ENCODE measurements at regions of chr22 and their contacts with region 1.

Region 1: DNA sequence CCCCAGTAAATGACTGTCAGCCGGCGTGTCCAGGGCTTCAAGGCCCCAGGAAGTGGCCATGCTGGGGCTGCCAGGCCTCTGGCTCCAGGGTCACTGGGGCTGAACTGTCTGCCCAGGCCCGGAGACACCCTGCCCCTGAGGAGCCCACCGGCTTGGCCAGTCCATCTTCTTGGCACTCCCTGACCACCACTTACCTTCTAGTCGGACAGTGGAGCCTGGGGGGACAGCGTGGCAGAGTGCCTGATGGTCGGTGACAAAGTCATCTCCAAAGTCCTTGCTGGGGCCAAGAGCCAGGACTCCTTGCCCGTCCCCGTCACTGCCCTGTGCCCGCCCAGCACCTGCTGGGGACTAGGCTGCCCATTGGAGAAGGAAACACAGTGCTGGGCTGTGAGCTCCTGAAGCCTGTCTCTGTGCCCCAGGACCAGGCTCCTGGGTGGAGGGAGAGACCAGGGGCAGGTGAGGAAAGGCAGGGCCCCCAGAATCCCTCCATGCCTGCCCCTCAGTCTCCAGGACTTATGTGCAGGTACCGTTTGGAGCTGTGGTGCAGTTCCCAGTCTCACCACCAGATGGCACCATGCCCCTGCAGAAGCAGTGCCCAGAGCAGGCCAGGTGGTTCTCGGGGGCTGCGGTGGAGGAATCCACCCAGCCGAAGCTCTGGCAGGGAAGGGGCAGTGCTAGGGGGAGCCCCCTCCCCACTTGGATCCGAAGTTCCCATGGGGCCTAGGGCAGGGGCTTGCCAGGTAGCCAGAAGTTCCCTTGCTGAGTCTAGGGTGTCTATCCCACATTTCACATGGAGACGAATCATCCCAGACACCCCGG is 6.0 kb upstream of the CCDC188 start:
- DNase-seq: peak; percentile 80 to 97 (median 89)
- ATAC-seq: peak; percentile 98
- H3K4me3 ChIP-seq: no peak overlapping the region
- H3K4me3 Mint-ChIP-seq: no peak overlapping the region
- H3K27ac ChIP-seq: no peak overlapping the region
- H3K27ac Mint-ChIP-seq: no peak overlapping the region
- H3K4me1 ChIP-seq: no peaks in the 10 kb centered on the region
- H3K4me1 Mint-ChIP-seq: peaks cover 4% of the 10 kb centered on the region
- H3K27me3 ChIP-seq: peaks cover 0 to 4% of the 10 kb centered on the region in 2 experiments
- H3K27me3 Mint-ChIP-seq: peaks cover 2% of the 10 kb centered on the region
- CTCF ChIP-seq: peak; percentile 97

Region 2: GRCh38 chr22:20205964-20206708 is 49.3 kb after region 1 on chr22:
- CTCF ChIA-PET with region 1: interaction called, 8 read pairs
- POLR2A ChIA-PET with region 1: no interaction called
- intact Hi-C with region 1: loop called in 1 of 2 experiments (anchors 1 kb)
- DNase-seq: peak; percentile 21 to 85 (median 73)
- ATAC-seq: peak; percentile 97
- H3K4me3 ChIP-seq: peak overlapping the region; percentile 70 to 86
- H3K4me3 Mint-ChIP-seq: peak overlapping the region; percentile 94
- H3K27ac ChIP-seq: peak overlapping the region; percentile 79 to 83
- H3K27ac Mint-ChIP-seq: peak overlapping the region; percentile 94
- H3K4me1 ChIP-seq: peaks cover 30% of the 10 kb centered on the region
- H3K4me1 Mint-ChIP-seq: peaks cover 29% of the 10 kb centered on the region
- H3K27me3 ChIP-seq: no peaks in the 10 kb centered on the region
- H3K27me3 Mint-ChIP-seq: no peaks in the 10 kb centered on the region
- CTCF ChIP-seq: no peak

Region 3: GRCh38 chr22:20238536-20238900 is 81.7 kb after region 1 on chr22:
- CTCF ChIA-PET with region 1: interaction called, 17 read pairs
- POLR2A ChIA-PET with region 1: no interaction called
- intact Hi-C with region 1: loop called in 1 of 2 experiments (anchors 1 kb)
- DNase-seq: peak in 8 of 9 experiments; percentile 31 to 80 (median 58)
- ATAC-seq: peak; percentile 41
- H3K4me3 ChIP-seq: peak overlapping the region in 1 of 2 experiments; percentile 7
- H3K4me3 Mint-ChIP-seq: peak overlapping the region; percentile 11
- H3K27ac ChIP-seq: peak overlapping the region; percentile 35 to 76
- H3K27ac Mint-ChIP-seq: peak overlapping the region; percentile 87
- H3K4me1 ChIP-seq: peaks cover 69% of the 10 kb centered on the region
- H3K4me1 Mint-ChIP-seq: peaks cover 35% of the 10 kb centered on the region
- H3K27me3 ChIP-seq: no peaks in the 10 kb centered on the region
- H3K27me3 Mint-ChIP-seq: no peaks in the 10 kb centered on the region
- CTCF ChIP-seq: no peak

Region 4: DNA sequence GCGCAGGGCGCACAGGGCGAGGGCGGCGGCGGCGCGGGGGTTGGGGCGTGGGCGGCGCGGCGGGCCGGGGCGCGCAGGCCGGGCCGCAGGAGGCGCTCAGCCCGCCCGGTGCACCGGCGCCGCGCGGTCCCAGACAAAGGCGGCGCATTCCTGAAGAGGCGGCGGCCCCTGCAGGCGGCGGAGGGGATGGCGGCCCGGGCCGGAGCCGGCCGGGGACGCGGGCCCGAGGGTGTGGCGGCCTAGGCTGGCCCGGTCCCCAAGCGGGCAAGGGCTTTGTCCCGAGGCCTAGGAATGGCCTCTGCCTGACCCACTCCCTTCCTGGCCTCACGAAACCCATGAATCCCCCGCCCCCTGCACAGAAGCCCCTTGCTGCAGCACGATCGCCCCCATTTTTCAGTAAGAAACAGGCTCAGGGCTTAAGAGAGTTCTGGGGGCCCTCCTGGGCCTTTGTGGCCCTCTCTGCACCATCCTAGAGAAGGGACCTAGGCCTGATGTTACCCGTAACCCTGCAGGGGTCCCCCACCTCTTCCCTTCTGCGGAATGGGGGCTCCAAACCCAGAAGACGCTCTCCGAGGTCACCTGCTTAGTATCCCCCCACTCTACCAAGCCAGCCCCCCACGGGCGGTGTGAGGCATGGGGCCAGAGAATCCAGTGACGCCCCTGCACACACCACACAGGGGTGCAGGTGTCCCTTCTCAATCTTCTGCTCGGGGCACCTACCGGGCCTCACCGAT is 111.6 kb after region 1 on chr22 and contains the start of gene RTN4R:
- CTCF ChIA-PET with region 1: interaction called, 11 read pairs
- POLR2A ChIA-PET with region 1: no interaction called
- intact Hi-C with region 1: loop called in 1 of 2 experiments (anchors 1 kb)
- DNase-seq: peak; percentile 36 to 77 (median 54)
- ATAC-seq: peak; percentile 86
- H3K4me3 ChIP-seq: peak within 1 kb of the TSS; percentile 19 to 31
- H3K4me3 Mint-ChIP-seq: peak within 1 kb of the TSS; percentile 74
- H3K27ac ChIP-seq: no peak within 1 kb of the TSS
- H3K27ac Mint-ChIP-seq: no peak within 1 kb of the TSS
- H3K4me1 ChIP-seq: peaks cover 10% of the 10 kb centered on the region
- H3K4me1 Mint-ChIP-seq: peaks cover 6% of the 10 kb centered on the region
- H3K27me3 ChIP-seq: no peaks in the 10 kb centered on the region
- H3K27me3 Mint-ChIP-seq: no peaks in the 10 kb centered on the region
- CTCF ChIP-seq: peak; percentile 48
- total RNA-seq, gene RTN4R: 1.1 to 1.2 TPM

Region 5: DNA sequence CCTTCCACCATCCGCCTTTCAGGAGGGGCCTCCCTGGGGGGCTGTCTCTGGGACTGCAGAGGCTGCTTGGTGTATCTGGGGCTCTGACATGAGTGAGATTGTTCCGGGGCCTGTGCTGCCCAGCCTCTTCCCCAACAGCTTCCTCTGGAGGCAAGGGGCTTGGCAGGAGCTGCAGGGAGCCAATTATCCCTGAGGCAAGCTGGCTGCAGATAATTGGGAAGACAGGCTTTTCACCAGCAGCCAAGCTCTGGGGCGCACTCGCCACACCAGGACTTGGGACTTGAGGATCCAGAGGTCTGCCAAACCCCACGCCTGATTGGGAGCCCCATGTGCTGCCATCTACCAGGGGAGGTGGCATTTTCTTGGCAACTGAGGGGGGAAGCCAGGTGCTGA is 126.8 kb after region 1 on chr22:
- CTCF ChIA-PET with region 1: interaction called, 24 read pairs
- POLR2A ChIA-PET with region 1: no interaction called
- intact Hi-C with region 1: loop called (anchors 1 kb)
- DNase-seq: no peak
- ATAC-seq: no peak
- H3K4me3 ChIP-seq: no peak overlapping the region
- H3K4me3 Mint-ChIP-seq: no peak overlapping the region
- H3K27ac ChIP-seq: no peak overlapping the region
- H3K27ac Mint-ChIP-seq: no peak overlapping the region
- H3K4me1 ChIP-seq: no peaks in the 10 kb centered on the region
- H3K4me1 Mint-ChIP-seq: peaks cover 3% of the 10 kb centered on the region
- H3K27me3 ChIP-seq: no peaks in the 10 kb centered on the region
- H3K27me3 Mint-ChIP-seq: peaks cover 2% of the 10 kb centered on the region
- CTCF ChIP-seq: no peak

Region 6: DNA sequence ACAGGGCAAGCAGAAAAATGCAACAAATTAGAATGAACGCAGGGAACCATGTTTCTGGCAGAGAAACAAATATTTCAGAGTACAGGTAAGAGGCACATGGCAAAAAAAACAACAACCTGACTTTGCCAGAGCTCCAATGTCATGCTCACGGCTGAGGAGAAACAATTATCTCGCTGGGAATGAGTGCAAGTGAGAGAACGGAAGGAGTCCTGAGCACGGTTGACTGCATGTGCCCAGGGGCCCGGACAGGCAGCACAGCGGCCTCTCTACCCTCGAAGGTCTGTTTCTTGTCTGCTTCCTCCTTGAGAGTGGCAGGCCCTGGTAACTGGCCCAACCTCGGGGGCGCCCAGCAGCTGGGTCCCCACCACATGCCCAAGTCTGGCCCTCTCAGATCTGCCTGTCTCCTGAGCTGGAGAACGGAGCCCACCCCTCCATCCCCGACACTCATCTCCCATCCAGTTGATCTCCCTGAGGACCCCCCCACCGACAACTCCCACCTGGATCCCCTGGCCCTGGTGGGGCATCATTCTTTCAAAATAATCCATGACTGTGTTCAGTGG is 135.9 kb after region 1 on chr22:
- CTCF ChIA-PET with region 1: interaction called, 17 read pairs
- POLR2A ChIA-PET with region 1: no interaction called
- intact Hi-C with region 1: no loop called
- DNase-seq: no peak
- ATAC-seq: no peak
- H3K4me3 ChIP-seq: no peak overlapping the region
- H3K4me3 Mint-ChIP-seq: no peak overlapping the region
- H3K27ac ChIP-seq: no peak overlapping the region
- H3K27ac Mint-ChIP-seq: no peak overlapping the region
- H3K4me1 ChIP-seq: no peaks in the 10 kb centered on the region
- H3K4me1 Mint-ChIP-seq: no peaks in the 10 kb centered on the region
- H3K27me3 ChIP-seq: no peaks in the 10 kb centered on the region
- H3K27me3 Mint-ChIP-seq: no peaks in the 10 kb centered on the region
- CTCF ChIP-seq: no peak

Region 7: GRCh38 chr22:20456064-20456721 is 299.4 kb after region 1 on chr22:
- CTCF ChIA-PET with region 1: interaction called, 3 read pairs
- POLR2A ChIA-PET with region 1: no interaction called
- intact Hi-C with region 1: loop called (anchors 1 to 5 kb)
- DNase-seq: peak; percentile 48 to 90 (median 75)
- ATAC-seq: peak; percentile 100
- H3K4me3 ChIP-seq: no peak overlapping the region
- H3K4me3 Mint-ChIP-seq: no peak overlapping the region
- H3K27ac ChIP-seq: no peak overlapping the region
- H3K27ac Mint-ChIP-seq: peak overlapping the region; percentile 4
- H3K4me1 ChIP-seq: peaks cover 16% of the 10 kb centered on the region
- H3K4me1 Mint-ChIP-seq: peaks cover 34% of the 10 kb centered on the region
- H3K27me3 ChIP-seq: no peaks in the 10 kb centered on the region
- H3K27me3 Mint-ChIP-seq: no peaks in the 10 kb centered on the region
- CTCF ChIP-seq: peak; percentile 87

Measured in CD8-positive, alpha-beta T cell (primary cell).